Dendritic cell treated with granulocyte-macrophage colony-stimulating factor and Interleukin-4, amounts not matched to agents 40 ng/mL and 50 ng/mL, for 4 days (primary cell): ENCODE measurements at regions of chr21 and their contacts with region 1.

Region 1: GRCh38 chr21:43718872-43719747 is at the start of gene PDXK:
- H3K4me3 Mint-ChIP-seq: peak within 1 kb of the TSS; percentile 96
- H3K27ac Mint-ChIP-seq: peak within 1 kb of the TSS; percentile 91
- H3K4me1 Mint-ChIP-seq: peaks cover 71% of the 10 kb centered on the region
- H3K27me3 Mint-ChIP-seq: peaks cover 23% of the 10 kb centered on the region

Region 2: DNA sequence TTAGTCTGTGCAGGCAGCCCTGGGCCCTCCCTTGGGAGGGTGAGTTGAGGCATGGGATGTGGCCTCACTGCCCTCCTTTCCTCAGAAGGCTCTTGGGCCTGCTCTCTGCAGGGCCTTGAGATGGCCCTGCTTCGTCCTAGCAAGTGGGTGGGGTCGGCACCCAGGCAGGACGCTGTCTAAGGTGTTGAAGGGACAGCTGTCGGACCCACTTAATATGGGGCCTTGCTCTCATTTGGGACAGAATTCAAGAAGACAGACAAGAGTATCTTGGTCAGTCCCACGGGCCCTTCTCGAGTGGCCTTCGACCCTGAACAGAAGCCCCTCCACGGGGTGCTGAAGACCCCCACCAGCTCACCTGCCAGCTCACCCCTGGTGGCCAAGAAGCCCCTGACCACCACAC is 26.2 kb before region 1 on chr21:
- intact Hi-C with region 1: loop called (anchors 1 kb)
- H3K4me3 Mint-ChIP-seq: peak overlapping the region; percentile 77
- H3K27ac Mint-ChIP-seq: peak overlapping the region; percentile 90
- H3K4me1 Mint-ChIP-seq: peaks cover 76% of the 10 kb centered on the region
- H3K27me3 Mint-ChIP-seq: no peaks in the 10 kb centered on the region

Region 3: GRCh38 chr21:43764576-43765495 is 45.7 kb after region 1 on chr21:
- intact Hi-C with region 1: no loop called
- H3K4me3 Mint-ChIP-seq: no peak overlapping the region
- H3K27ac Mint-ChIP-seq: peak overlapping the region; percentile 77
- H3K4me1 Mint-ChIP-seq: peaks cover 54% of the 10 kb centered on the region
- H3K27me3 Mint-ChIP-seq: no peaks in the 10 kb centered on the region

Region 4: DNA sequence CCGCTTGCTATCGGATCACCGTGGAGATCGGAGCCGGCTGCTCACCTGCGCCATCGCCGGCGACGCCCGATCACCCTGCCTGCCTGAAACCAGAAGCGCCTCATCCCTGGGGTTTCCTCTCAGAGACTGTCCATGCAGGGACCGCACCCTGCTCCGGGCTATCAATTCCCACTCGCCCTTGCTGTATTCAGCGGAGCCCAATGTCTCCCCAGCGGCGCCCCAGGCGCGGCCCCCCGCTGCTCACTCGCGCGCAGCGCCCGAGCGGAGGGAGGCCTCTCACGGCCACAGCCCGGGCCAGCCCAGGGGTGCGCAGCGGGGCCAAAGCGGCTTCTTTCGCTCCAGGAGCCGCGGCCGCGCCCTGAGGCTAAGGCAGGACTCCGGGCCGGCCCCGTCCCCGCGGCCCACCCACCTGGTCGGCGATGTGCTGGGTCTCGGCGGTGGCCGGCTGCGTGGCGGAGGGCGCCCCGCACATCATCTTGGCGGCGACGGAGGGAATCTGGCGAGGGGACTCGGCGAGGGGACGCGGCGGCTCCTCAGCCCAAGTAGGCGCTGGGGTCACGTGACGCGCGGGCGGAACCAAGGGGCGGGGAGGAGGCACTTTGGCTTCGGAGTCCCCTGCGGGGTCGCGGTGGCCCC is 56.8 kb after region 1 on chr21 and contains the start of gene CSTB:
- intact Hi-C with region 1: loop called (anchors 2 kb)
- H3K4me3 Mint-ChIP-seq: peak within 1 kb of the TSS; percentile 99
- H3K27ac Mint-ChIP-seq: peak within 1 kb of the TSS; percentile 98
- H3K4me1 Mint-ChIP-seq: peaks cover 70% of the 10 kb centered on the region
- H3K27me3 Mint-ChIP-seq: no peaks in the 10 kb centered on the region

Region 5: GRCh38 chr21:43916691-43917514 is 197.8 kb after region 1 on chr21:
- intact Hi-C with region 1: no loop called
- H3K4me3 Mint-ChIP-seq: peak overlapping the region; percentile 77
- H3K27ac Mint-ChIP-seq: peak overlapping the region; percentile 61
- H3K4me1 Mint-ChIP-seq: peaks cover 54% of the 10 kb centered on the region
- H3K27me3 Mint-ChIP-seq: peaks cover 1% of the 10 kb centered on the region